Left cardiac atrium (tissue), 4 donors: ENCODE measurements at regions of chr11 and their contacts with region 1.

Region 1: GRCh38 chr11:1515082-1516060 is 28.8 kb upstream of the MOB2 start:
- DNase-seq: peak; percentile 86
- ATAC-seq: peak; percentile 86 to 93

Region 2: GRCh38 chr11:1202776-1203504 is 312.4 kb before region 1 on chr11:
- intact Hi-C with region 1: loop called in 1 of 2 experiments (anchors 2 kb)
- DNase-seq: peak; percentile 60
- ATAC-seq: peak; percentile 72 to 79

Region 3: DNA sequence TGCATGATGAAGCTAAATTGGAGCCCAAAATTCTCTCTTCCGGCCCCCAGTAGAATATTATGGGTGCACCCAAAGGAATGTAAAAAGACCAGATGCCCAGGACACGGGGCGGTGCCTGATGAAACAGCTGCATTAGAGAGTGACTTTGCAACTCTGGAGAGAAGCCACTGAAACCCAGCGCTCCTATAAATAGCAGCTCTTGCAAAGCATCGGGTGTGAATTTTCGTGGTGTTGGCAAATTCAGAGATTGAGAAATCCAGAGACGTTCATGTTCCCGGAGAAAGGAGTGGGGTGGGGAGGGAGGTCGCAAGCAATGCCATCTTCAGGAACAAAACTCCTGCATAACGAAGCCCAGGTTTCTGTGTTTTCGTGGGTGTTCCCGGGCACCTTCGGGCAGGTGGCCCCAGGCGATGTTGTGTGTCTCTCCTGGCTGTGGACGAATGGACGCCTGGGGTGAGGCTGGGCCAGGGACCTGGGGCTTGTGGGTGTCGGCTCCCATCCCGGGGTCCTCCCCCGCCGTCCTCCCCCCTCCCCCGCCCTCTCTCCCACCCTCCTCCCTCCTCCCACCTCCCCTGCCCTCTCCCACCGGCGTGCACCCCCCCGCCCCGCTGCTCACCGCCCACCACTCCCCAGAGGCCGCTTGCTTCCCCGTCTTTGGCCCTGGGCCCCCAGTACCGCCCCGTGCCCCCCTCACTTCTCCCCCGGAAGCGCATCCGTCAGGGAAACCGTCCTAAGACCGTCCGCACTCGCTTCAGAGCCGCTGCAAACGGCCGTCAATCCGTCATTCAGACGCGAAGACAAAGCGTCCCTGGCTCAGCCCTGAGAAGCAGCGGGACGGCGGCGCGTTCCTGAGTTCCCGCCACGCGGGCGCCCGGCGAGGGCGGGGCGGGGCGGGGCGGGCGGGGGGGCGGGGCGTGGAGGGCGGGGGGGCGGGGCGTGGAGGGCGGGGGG is 179.3 kb before region 1 on chr11:
- intact Hi-C with region 1: loop called in 1 of 2 experiments (anchors 10 kb)
- DNase-seq: peak; percentile 80
- ATAC-seq: peak; percentile 76 to 85

Region 4: DNA sequence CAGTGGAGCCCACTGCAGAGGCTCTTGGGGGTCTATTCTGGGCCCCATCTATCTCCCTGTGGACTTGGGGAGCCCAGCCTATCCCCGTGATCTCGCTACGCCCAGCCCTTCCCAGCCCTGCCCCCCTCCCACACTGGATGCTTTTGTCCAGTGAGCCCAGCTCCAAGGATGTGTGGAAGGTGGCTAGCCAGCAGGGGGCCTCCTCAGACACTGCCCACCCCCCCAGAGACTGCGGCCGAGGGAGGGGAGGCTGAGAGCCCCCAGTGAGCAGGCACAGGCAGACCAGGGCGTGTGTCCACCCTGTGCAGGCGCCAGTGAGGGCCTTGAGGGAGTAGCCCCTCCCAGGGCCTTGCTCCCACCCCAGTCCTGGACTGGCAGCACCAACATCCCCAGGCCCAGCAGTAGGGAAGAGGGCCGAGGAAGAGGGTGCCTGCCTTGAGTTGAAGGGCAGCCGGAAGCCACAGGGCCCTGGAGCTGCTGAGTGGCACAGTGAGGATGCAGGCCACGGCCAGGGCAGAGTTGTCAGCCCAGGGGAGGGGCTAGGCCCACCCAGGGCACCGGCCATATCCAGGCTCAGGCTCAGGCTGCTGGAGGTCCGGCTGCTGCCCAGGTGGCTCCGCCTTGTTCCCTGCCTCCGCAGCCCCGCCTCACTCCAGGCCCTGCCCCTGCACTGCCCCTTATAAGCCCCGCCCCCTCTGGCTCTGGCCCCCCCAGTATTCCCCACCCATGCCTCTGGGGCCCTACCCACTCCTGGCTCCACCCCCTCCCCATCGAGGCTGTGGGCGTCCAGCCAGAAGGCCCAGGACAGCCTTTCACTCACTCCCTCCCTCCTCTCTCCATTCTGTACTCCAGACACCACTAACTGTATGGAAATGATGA is 56.8 kb before region 1 on chr11:
- intact Hi-C with region 1: loop called in 1 of 2 experiments (anchors 10 kb)
- DNase-seq: peak; percentile 52
- ATAC-seq: peak; percentile 62 to 64